Activated CD4-positive, alpha-beta T cell treated with anti-CD3 and anti-CD28 coated beads, Interleukin-2, amount 10 ng/mL, durations not matched to agents 7 days and 5 days (primary cell): ENCODE measurements at regions of chr1 and their contacts with region 1.

Region 1: DNA sequence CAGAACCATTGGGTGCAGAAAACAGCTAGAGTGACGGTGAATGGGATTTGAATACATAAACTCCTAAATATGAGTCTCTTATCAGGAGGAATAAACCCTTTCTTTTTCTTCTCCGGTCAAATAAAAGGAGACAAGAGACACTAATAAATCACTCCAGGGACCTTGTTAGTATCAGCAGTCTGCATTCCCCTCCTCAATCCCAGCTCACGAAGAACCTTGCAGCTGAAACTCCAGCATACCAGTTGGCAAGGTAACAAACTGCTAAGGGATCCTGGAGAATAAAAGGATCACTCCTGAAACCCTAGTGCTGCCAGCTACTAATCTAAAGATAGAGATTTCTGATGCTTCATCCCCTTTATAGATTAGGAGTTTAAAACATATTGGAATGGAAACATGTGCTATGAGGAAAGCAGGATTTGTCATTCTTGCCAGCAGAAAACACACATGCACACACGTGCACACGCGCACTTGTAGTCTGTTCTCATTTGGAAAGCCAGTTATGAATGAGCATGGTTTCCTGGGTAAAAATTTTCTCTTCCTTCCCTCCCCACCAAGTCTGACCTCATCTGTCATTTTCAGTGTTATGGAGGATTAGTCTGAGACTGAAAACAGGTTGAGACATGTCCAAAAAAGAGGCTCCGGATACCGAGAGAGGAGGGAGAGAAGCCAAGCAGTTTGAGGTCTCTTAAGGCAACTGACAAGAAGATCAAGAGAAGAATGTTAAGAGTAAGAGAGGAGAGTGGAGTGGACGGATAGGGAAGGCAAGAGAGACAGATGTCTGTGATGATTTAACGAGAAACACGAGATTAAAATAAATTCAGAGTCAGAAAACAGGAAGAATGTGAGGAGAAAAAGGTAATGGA is 10.9 kb downstream of the IER5 start:
- DNase-seq: peak; percentile 46
- H3K4me3 Mint-ChIP-seq: peak overlapping the region; percentile 11
- H3K27ac Mint-ChIP-seq: peak overlapping the region; percentile 83
- H3K4me1 Mint-ChIP-seq: peaks cover 83% of the 10 kb centered on the region
- H3K27me3 Mint-ChIP-seq: no peaks in the 10 kb centered on the region

Region 2: DNA sequence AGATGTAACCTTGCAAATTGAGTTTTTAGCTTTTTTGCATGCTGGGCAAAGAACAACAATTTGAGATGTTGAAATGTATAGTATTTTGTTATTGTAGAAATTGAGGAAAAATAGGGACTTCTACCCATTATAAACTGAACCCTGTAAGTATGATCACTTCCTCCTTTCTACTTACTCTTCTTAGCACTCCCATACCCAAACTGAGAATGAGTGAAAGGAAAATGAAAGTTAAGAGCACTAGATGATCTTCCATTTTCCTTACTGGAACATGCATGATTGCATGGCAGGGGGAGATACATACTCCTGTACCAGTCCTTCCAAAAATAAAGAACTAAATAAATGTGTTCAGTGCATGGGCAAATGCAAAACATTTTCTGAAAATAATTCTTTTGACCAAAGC is 294.1 kb before region 1 on chr1:
- CTCF ChIA-PET with region 1: no interaction called
- POLR2A ChIA-PET with region 1: no interaction called
- DNase-seq: no peak
- H3K4me3 Mint-ChIP-seq: no peak overlapping the region
- H3K27ac Mint-ChIP-seq: peak overlapping the region; percentile 20
- H3K4me1 Mint-ChIP-seq: peaks cover 9% of the 10 kb centered on the region
- H3K27me3 Mint-ChIP-seq: no peaks in the 10 kb centered on the region

Region 3: DNA sequence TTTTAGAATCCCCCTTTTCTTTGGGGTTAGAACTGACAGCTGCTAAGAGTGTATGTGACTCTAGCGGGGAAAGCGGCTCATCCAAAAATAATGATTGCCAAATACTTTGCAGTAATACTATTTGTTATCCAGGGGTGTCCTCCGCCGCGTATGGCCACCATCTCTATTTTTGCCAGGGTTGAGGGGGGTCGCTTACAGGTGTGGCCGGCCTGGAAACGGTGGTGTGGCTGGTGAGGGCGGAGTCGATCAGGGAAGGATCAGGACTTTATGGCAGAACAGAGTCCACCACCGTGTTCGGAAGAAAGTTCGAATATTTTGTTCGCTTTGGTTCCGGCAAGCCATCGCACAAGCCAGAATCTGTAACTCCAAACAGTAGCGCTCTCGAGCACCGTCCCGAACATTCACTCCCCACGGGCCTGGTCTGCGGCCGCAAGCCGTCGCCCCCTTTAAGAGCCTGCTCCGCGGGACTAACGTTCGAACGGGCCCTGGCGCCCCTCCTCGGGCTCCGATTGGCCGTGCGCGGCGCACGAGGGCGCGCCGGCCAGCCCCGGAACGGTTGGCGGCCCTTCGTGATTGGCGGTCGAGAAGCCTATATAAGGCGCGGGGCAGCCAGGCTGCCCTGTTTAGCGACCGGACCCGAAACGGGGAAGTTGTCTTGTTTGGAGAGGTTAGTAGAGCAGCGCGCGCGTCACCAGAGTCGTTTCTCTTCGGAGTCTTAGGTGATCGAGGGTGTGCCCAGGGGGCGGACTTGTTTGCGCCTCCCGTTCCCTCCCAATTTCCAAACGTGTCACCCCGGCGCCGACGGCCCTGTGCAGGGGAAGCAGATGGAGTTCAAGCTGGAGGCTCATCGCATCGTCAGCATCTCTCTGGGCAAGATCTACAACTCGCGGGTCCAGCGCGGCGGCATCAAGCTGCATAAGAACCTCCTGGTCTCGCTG is 11.0 kb before region 1 on chr1 and contains the start of gene IER5:
- CTCF ChIA-PET with region 1: interaction called, 30 read pairs
- POLR2A ChIA-PET with region 1: interaction called, 3 read pairs
- DNase-seq: peak; percentile 96
- H3K4me3 Mint-ChIP-seq: peak within 1 kb of the TSS; percentile 99
- H3K27ac Mint-ChIP-seq: peak within 1 kb of the TSS; percentile 96
- H3K4me1 Mint-ChIP-seq: peaks cover 47% of the 10 kb centered on the region
- H3K27me3 Mint-ChIP-seq: peaks cover 4% of the 10 kb centered on the region
- total RNA-seq, gene IER5: 20.3 to 24.9 TPM

Region 4: DNA sequence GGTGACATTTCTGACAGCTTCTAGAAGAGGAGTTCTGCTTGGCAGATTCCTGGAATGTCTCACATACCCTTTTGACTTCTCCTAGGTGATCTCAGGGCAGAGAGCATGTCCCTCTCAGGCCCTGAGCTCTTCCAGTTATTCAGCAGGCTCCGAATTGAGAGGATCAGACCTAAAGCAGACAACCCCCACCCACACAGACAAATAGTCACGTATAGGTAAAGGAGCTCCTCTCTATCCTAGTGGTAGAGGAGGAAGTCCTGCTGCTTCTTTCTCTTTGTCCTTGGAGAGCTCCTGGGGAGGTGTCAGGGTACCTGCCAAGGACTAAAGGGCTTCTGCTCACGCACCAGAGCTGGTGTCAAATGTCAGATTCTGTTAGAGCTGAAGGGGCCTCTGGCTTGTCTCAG is 117.2 kb after region 1 on chr1:
- CTCF ChIA-PET with region 1: no interaction called
- POLR2A ChIA-PET with region 1: no interaction called
- DNase-seq: no peak
- H3K4me3 Mint-ChIP-seq: no peak overlapping the region
- H3K27ac Mint-ChIP-seq: no peak overlapping the region
- H3K4me1 Mint-ChIP-seq: no peaks in the 10 kb centered on the region
- H3K27me3 Mint-ChIP-seq: peaks cover 12% of the 10 kb centered on the region

Region 5: DNA sequence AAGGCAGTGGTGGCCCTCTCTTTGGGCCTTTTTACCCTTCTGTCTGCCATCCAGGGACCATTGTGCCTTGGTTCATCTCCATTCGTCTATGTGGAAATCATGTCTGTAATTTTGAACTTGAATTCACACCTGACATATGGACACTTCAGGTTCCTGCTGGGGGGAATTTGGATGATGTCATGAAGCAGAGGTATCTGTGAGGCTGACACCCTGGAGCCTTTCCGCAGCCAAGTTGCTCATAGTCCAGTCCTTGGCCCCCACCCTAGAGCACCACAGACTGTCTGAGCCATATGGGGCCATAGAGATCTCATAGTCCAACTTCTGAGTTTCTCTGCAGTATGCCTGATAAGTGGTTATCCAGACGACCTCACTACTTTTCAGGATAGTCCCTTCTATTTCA is 236.2 kb after region 1 on chr1:
- CTCF ChIA-PET with region 1: no interaction called
- POLR2A ChIA-PET with region 1: no interaction called
- DNase-seq: no peak
- H3K4me3 Mint-ChIP-seq: no peak overlapping the region
- H3K27ac Mint-ChIP-seq: no peak overlapping the region
- H3K4me1 Mint-ChIP-seq: no peaks in the 10 kb centered on the region
- H3K27me3 Mint-ChIP-seq: no peaks in the 10 kb centered on the region